MCF 10A (cell line): ENCODE measurements at regions of chr7 and their contacts with region 1.

Region 1: DNA sequence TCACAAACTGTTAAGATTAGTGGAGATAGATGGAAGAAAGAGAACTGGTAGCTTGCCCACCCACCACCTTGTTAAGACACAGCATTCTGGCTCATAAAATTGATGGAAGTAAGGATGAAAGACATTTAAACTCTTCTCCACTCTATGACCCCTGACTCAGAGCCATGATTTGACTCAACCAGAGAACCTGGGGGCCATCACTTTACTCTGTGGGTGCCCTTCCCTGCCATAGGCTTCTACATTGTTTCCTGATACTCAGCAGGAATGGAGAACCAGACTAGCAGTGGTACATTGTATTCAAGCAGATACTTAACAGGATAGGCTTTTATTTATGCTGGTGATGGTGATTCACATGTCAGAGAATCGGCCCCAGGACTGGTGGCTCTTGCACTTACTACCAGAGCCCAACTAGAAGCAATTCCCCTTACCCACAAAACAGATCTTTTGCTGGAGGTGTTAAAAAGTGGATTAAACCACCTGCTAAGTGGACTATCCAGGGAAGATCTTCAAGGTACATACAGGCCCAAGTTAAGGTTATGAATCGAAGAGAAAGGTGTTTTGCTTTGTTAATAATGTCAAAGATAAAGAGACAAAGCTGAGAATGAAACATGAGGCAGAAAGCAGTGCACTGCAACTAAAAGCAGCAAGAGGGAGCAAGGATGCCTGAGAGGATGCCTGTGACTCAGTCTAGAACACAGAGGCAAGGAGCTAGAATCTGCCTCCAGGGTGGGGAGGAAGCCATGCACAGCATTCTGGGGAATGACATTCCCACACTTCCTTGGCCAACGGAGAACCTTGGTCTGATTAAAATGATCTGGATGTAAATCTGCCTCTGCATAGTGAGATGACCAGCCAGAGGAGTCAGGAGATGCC is 36.0 kb upstream of the GLI3 start:
- DNase-seq: peak; percentile 91
- H3K4me3 Mint-ChIP-seq: peak overlapping the region; percentile 53
- H3K27ac Mint-ChIP-seq: peak overlapping the region; percentile 88
- H3K4me1 Mint-ChIP-seq: peaks cover 32% of the 10 kb centered on the region
- H3K27me3 Mint-ChIP-seq: no peaks in the 10 kb centered on the region
- CTCF ChIP-seq: peak; percentile 57

Region 2: DNA sequence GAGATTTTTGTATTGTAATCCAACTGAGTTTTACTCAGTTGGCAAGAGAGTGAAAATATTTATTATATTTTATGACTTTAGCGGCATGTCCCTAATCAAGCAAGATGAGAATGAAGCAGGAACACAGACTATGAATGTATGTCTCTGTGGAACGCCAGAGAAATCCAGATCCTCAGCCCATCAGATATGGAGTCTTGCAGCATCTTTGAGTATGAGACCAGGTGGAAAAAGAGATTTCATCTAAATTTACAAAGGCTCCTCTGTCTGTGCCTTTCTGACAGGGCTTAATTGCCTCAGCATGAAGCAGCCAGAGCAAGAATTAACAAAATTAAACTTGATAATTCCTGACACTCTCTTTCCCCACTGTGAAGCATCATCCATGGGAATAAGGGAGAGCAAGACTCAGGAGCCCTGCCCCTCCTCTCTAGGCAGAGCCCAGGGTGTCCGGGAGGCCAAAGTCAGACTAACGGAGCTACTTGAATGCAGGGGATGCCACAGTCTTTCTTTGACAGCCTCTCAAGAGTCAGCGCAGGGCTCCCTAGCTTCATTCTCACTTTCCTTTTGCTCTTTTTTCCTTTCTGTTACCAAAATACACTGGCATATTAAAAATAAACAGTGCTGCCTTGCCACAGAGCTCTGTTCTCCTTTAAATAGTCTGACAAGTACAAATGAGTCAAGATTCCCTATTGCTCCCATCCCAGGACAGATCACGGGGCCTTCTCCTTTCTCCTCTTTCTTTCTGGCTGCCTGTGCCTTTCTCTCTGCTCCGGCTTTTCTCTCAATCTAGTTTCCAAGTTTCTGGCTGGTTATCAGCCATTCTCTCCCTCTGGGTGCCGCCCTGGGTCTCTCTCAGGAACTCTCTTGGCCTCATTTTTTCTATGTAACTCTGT is 438.0 kb before region 1 on chr7:
- CTCF ChIA-PET with region 1: no interaction called
- POLR2A ChIA-PET with region 1: no interaction called
- intact Hi-C with region 1: no loop called
- DNase-seq: no peak
- H3K4me3 Mint-ChIP-seq: no peak overlapping the region
- H3K27ac Mint-ChIP-seq: no peak overlapping the region
- H3K4me1 Mint-ChIP-seq: no peaks in the 10 kb centered on the region
- H3K27me3 Mint-ChIP-seq: no peaks in the 10 kb centered on the region
- CTCF ChIP-seq: no peak

Region 3: DNA sequence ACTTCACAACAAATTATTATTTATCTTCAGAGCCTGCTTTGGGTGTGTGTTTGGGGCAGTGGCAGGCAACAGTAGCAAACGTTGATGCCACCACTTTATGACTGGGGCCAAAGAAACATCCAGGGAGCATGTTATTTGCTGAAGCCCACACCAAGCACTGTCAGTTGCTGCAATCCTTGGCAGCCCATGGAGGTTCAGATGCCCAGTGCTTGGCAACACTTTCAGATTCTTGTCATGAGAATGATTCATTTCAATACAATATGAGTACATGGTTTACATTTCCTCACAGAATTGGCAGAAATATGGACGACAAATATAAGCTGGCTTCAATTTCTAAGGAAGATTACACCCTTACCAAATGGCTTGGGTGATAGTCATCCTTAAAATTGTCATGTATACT is 10.5 kb after region 1 on chr7:
- CTCF ChIA-PET with region 1: interaction called, 8 read pairs
- POLR2A ChIA-PET with region 1: interaction called, 18 read pairs
- intact Hi-C with region 1: no loop called
- DNase-seq: peak; percentile 95
- H3K4me3 Mint-ChIP-seq: no peak overlapping the region
- H3K27ac Mint-ChIP-seq: peak overlapping the region; percentile 31
- H3K4me1 Mint-ChIP-seq: peaks cover 32% of the 10 kb centered on the region
- H3K27me3 Mint-ChIP-seq: no peaks in the 10 kb centered on the region
- CTCF ChIP-seq: no peak

Region 4: DNA sequence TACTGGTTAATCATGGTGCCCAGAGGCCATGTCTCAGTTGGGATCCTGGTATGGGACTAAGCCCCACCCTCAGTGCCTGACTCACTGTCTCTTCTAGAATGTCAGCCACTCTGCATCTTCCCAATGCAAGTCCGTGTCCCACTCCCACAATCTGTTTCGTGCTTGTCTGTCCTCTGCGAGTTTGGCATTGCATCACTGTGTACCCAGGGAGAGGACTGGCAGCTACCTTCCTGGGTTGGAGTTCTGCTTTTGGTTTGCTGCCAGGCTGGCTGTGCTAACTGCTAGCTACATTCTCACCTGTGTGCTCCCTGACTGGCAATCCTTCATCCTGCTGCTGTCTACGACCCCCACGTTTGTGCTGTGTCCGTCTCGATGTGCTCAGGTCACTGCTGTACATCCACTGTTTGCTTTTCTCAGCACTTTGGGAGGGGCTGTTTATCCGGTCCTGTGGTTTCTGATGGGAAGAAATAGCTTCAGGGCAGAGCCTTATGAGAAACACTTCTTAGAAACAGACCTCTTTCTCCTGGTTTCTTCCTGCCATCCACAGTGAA is 20.0 kb after region 1 on chr7:
- CTCF ChIA-PET with region 1: interaction called, 13 read pairs
- POLR2A ChIA-PET with region 1: interaction called, 23 read pairs
- intact Hi-C with region 1: no loop called
- DNase-seq: peak; percentile 97
- H3K4me3 Mint-ChIP-seq: peak overlapping the region; percentile 70
- H3K27ac Mint-ChIP-seq: peak overlapping the region; percentile 92
- H3K4me1 Mint-ChIP-seq: peaks cover 28% of the 10 kb centered on the region
- H3K27me3 Mint-ChIP-seq: no peaks in the 10 kb centered on the region
- CTCF ChIP-seq: no peak

Region 5: DNA sequence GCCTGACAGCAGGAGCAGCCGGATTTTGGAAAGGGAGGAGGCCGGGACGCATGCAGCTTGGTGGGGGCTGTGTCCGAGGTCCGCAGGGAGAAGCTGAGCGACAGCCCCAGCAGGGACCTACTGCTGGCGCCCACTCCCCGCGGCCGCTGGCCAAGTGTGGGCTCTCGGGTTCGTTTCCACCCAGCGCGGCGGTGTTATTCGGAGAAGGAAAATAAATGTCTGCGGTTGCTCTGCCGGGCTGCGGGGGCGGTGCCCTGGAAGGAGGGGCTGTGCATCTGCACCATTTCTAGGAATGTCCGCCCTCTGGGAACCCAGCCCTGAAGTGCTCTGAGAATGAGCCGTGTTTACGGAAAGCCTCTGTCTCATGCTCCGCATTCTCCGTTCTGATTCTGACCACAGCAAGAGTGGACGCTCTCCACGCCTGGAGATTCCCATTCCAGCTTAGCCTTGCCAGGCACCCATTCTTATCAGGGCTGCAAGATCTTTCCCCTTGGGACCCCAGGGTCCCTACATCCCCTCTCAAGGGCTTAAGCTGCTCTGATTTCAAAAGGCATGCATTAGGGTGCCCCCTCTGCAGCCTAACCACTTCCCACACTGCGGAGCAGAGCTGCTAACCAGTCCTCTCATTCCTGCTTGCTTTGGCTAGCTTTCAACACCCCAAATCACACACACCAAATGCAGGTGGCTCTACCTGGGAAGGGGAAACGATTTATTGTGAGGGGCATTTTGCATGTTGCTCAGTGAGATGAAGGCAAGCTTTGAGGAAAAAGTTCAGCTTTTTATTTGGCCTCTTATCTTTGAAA is 220.6 kb after region 1 on chr7:
- CTCF ChIA-PET with region 1: interaction called, 3 read pairs
- POLR2A ChIA-PET with region 1: interaction called, 7 read pairs
- intact Hi-C with region 1: loop called (anchors 2 kb)
- DNase-seq: peak; percentile 94
- H3K4me3 Mint-ChIP-seq: peak overlapping the region; percentile 79
- H3K27ac Mint-ChIP-seq: peak overlapping the region; percentile 93
- H3K4me1 Mint-ChIP-seq: peaks cover 29% of the 10 kb centered on the region
- H3K27me3 Mint-ChIP-seq: no peaks in the 10 kb centered on the region
- CTCF ChIP-seq: no peak

Region 6: GRCh38 chr7:42574685-42575084 is 301.7 kb after region 1 on chr7:
- CTCF ChIA-PET with region 1: interaction called, 11 read pairs
- POLR2A ChIA-PET with region 1: interaction called, 10 read pairs
- intact Hi-C with region 1: loop called (anchors 1 kb)
- DNase-seq: peak; percentile 31
- H3K4me3 Mint-ChIP-seq: no peak overlapping the region
- H3K27ac Mint-ChIP-seq: no peak overlapping the region
- H3K4me1 Mint-ChIP-seq: peaks cover 15% of the 10 kb centered on the region
- H3K27me3 Mint-ChIP-seq: no peaks in the 10 kb centered on the region
- CTCF ChIP-seq: peak; percentile 43

Region 7: DNA sequence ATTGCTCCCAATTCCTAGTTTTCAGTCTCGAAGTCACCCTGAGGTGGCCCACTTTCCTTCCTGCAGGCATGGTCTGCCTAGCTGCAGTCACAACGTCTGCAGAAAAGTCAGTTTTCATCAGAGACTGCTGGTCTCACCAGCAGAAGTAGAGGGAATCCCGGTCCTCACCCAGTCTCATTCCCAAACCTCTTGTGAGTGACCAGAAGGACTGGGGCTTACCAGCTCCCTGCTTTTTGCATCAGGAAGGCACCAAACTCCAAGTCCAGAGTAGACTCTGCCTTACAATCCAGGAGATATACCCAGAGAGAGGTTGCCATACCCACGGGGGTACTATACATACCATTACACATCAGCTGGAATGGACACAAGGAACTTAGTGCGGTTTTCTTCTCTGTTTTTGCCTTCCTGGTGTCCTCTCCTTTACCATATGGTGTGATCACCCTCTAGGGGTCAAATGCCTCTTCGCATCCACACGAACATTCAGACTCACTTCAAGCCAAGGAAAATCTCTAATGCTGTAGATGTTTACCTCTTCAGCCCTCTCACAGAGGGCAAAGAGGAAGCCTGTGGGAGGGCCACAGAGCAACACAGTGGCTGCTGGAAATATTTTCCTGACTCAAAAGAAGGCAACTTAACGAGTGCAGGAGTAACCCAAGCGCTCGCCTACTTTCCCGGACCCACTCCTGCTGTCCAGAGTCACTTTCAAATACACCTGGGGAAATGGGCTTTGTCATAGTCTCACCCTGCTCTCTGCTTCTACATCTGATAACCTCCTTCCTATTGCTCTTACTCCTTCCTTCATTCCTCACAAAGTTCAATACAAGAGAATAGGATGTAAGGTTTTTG is 418.0 kb after region 1 on chr7:
- CTCF ChIA-PET with region 1: interaction called, 17 read pairs
- POLR2A ChIA-PET with region 1: no interaction called
- intact Hi-C with region 1: loop called (anchors 1 kb)
- DNase-seq: peak; percentile 76
- H3K4me3 Mint-ChIP-seq: no peak overlapping the region
- H3K27ac Mint-ChIP-seq: peak overlapping the region; percentile 19
- H3K4me1 Mint-ChIP-seq: no peaks in the 10 kb centered on the region
- H3K27me3 Mint-ChIP-seq: no peaks in the 10 kb centered on the region
- CTCF ChIP-seq: peak; percentile 71

Region 8: DNA sequence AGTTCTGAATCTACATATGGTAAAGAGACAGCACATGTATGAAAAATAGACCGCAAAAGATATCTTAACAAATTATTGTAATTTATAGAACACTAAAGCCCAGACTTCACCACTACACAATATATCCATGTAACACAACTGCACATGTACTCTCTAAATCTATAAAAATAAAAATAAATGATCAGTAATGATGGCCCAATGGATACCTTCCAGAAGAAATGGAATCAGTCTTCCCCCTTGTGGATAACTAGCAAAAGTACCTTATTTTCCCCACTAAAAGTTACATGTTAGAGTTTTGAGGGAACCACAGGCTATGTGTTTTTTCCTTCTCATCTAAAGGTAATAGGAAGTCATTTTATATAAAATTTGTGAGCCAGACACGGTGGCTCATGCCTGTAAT is 613.1 kb after region 1 on chr7:
- CTCF ChIA-PET with region 1: no interaction called
- POLR2A ChIA-PET with region 1: no interaction called
- intact Hi-C with region 1: loop called (anchors 10 kb)
- DNase-seq: peak; percentile 42
- H3K4me3 Mint-ChIP-seq: no peak overlapping the region
- H3K27ac Mint-ChIP-seq: no peak overlapping the region
- H3K4me1 Mint-ChIP-seq: peaks cover 9% of the 10 kb centered on the region
- H3K27me3 Mint-ChIP-seq: no peaks in the 10 kb centered on the region
- CTCF ChIP-seq: peak; percentile 56